ENCODE measurements at regions of chr14 and their contacts with region 1.

Region 1: DNA sequence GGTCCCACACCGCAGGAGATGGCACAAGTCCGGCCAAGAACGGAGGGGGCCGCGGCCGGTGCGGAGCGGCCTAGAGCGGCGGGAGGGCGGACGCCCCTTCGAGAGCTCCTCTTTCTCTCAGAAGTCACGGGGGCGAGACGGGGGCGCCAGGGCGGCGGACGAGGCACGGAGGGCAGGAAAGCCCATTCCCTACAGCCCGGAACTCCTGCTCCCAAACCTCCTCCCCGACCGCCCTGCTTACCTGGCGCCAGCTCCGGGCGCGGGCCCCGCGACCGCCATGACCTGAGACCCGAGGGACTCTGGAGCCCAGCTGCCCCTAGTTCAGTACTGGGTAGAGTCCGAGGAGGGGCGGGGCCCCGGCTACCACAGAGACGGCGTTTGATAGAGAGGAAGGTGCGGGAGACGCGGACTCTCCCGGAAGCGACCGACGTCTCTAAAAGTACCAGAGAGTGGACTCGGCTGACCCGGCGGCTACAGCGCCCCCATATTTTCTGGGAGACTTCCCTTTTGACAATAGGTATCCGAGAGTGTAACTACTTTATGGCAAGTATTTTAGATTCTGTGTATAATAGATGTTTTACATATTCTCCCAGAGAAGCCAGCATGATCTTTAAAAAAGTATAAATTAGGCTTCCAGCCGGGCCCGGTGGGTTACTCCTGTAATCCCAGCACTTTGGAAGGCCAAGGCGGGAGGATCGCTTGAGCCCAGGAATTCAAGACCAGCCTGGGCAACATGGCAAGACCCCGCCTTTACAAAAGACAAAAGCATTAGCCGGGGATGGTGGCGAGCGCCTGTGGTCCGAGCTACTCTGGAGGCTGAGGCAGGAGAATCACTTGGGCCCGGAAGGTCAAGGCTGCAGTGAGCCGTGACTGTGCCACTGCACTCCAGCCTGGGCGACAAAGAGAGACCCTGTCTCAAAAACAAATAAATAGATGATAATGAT is at the start of gene ABCD4:
- DNase-seq: peak; percentile 93
- CTCF ChIP-seq: peak; percentile 57

Region 2: GRCh38 chr14:73886449-73887317 is 416.2 kb before region 1 on chr14 and contains the start of gene ZNF410:
- CTCF ChIA-PET with region 1: no interaction called
- POLR2A ChIA-PET with region 1: no interaction called
- DNase-seq: peak; percentile 95
- CTCF ChIP-seq: no peak

Region 3: GRCh38 chr14:74244115-74244514 is 58.8 kb before region 1 on chr14:
- CTCF ChIA-PET with region 1: no interaction called
- POLR2A ChIA-PET with region 1: no interaction called
- DNase-seq: no peak
- CTCF ChIP-seq: peak; percentile 1

Region 4: GRCh38 chr14:74314576-74314975 is 11.7 kb after region 1 on chr14:
- CTCF ChIA-PET with region 1: interaction called, 26 read pairs
- POLR2A ChIA-PET with region 1: no interaction called
- DNase-seq: no peak
- CTCF ChIP-seq: no peak

Measured in GM10248 (cell line).